Left cardiac atrium (tissue), 4 donors: ENCODE measurements at regions of chr1 and their contacts with region 1.

Region 1: DNA sequence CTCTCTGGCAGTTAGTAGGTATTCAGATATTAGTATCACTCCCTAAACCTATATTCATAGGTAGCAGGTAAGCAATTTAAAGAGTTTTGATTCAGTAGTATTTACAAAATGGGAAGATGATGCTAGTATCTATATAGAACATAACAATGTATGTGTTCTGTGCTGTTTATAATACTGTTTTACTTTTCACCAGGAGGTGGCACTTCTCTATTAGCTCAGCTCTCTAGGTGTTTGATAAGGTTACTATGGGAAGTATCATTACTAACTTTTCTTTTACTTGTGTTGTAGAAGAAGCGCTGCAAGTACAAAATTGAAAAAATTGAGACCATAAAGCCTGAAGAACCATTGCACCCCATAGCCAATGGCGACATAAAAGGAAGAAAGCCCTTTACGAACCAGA is 49.4 kb upstream of the FASLG start:
- DNase-seq: no peak
- ATAC-seq: peak; percentile 22 to 53

Region 2: DNA sequence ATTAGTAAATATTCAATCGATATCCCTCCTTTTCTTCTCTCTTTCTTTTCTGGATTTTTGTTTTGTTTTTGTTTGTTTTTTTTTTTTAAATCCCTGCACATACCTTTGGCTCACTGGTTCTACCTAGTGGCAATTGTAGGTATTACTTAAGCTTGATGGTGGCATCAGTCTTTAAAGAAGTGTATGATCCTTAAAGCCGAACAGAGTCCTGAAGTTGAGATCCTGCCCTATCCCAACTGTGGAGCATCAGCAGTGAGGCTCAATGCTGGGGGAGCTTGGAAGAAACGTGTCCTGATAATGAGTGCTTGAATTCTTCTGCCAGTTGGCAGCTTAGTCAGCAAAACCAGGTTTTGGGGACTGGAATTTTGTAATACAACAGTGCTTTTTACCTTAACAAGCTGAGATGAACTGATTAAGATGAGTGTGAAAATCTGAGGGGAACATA is 110.2 kb after region 1 on chr1:
- intact Hi-C with region 1: loop called (anchors 2 to 10 kb)
- DNase-seq: no peak
- ATAC-seq: peak; percentile 44 to 74

Region 3: DNA sequence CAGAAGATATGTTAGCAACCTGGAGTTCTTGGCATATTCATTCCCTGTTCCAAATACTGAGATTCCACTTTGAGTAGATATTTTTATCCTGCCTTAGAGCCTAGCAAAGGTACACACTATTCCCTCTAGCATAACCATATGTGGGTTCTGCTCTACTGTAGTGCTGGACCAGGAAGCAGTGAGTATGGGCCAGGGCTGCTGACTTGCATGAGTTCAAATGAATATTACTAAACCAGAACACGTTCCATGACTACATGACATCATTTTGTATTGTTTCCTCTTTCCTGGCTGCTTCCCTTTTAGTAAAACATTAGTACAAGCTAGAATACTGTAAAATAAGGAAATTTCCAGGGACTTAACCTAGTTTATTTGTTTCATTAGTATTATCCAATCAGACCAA is 400.1 kb after region 1 on chr1:
- intact Hi-C with region 1: no loop called
- DNase-seq: no peak
- ATAC-seq: peak in 1 of 2 donors; percentile 72